Activated B cell treated with CpG ODN at 0.5 μM for 24 hours (primary cell): ENCODE measurements at regions of chr9 and their contacts with region 1.

Region 1: GRCh38 chr9:68584189-68585033 is 43.7 kb upstream of the TMEM252 start:
- DNase-seq: peak; percentile 57
- ATAC-seq: peak; percentile 100
- H3K4me3 Mint-ChIP-seq: peak overlapping the region; percentile 42
- H3K27ac Mint-ChIP-seq: no peak overlapping the region
- H3K4me1 Mint-ChIP-seq: peaks cover 27% of the 10 kb centered on the region
- H3K27me3 Mint-ChIP-seq: no peaks in the 10 kb centered on the region
- CTCF ChIP-seq: peak; percentile 99

Region 2: DNA sequence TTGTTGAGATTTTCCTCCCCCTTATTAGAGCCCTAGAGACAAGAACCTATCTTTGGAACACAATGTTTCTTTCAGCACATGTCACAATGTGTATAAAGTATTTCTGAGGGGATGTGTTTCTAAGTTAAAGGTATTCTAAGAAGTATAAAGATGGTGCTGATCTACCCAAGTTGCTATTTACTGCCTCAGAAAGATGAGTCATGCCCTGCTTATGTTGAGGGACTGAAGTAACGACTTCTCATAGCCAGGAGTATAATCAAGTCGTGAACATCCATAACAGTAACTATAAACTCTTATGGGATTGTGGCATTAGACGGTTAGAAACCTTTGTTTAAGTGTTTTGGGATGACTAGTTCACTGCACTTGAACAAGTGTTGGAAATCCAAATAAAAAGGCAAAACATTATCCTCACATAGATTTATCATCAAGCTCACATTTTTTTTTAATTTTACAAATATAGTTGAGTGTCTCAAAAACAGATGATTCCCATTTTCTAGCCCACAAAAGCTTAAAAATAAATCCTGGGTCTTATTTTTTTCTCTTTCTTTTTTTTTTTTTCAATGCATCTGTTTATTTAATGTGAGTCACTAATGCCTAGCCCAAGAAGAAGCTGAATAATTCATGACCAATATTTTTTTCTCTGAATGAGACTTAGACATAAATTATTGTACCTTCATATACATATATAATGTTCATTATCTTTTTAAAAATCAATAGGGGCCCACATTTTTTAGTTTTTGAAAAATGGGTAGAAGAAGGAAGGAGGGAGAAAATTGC is 31.5 kb before region 1 on chr9:
- CTCF ChIA-PET with region 1: no interaction called
- POLR2A ChIA-PET with region 1: no interaction called
- intact Hi-C with region 1: no loop called
- DNase-seq: no peak
- ATAC-seq: no peak
- H3K4me3 Mint-ChIP-seq: no peak overlapping the region
- H3K27ac Mint-ChIP-seq: no peak overlapping the region
- H3K4me1 Mint-ChIP-seq: peaks cover 8% of the 10 kb centered on the region
- H3K27me3 Mint-ChIP-seq: no peaks in the 10 kb centered on the region
- CTCF ChIP-seq: no peak

Region 3: DNA sequence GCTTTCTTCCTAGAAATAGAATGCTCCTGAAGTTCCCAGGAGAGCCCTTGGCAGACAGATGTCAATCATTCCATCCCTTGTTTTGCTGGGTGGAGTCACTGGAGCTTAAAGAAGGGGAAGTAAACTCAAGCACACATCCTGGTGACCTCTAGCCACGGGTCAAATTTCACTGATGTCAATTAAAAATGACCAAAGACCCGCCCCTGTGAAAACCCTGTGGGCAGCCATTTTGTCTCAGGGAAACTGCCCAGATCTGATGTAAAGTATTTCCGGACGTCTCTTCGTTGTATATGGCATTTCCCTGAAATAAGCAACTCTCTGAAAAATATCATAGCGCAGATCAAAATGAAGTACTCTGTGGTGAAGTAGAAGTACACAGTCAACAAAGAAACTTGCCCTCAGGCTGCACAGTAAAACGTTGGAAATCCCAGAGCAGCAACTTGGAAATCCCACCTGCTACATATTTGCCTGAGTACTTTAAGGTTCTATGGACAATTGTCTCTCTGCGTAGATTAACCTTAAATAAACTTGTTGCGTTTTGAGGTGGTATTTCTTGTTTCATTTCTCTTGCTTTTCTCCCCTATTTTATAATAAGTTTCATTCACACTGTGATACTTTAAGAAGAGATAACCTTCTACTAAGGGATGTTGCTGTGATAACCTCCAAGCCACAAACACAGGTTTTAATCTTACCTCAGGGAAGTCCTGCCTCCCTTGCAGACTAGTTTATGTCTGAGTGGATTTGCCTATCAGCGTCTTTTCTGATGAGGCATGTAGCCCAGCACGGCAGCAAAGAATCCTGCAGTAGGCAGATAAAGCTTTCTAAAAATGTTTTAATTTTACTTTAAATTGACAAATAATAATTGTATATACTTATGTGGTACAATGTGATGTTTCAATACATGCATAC is 59.7 kb after region 1 on chr9:
- CTCF ChIA-PET with region 1: interaction called, 4 read pairs
- POLR2A ChIA-PET with region 1: interaction called, 6 read pairs
- intact Hi-C with region 1: loop called (anchors 2 kb)
- DNase-seq: peak; percentile 31
- ATAC-seq: peak; percentile 63
- H3K4me3 Mint-ChIP-seq: peak overlapping the region; percentile 73
- H3K27ac Mint-ChIP-seq: peak overlapping the region; percentile 94
- H3K4me1 Mint-ChIP-seq: peaks cover 93% of the 10 kb centered on the region
- H3K27me3 Mint-ChIP-seq: no peaks in the 10 kb centered on the region
- CTCF ChIP-seq: no peak

Region 4: DNA sequence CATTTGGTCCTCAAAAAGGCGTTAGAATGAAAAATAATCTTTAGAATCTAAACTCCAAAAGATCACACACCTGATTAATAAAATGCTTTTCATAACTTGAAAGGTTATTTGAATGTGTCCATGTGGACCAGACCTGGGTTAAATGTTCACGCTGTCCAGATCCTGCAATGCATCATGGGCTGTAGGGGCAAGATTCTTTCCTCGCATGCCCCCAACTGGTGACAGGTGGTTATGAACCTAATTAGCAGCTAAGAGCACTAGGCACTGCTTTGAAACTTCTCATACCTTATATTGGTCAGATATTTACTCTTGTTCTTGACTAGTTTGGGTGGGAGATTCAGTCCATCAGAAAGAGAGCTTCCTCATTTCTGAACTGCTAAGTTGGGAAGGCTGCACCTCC is 101.4 kb after region 1 on chr9:
- CTCF ChIA-PET with region 1: interaction called, 38 read pairs
- POLR2A ChIA-PET with region 1: no interaction called
- intact Hi-C with region 1: loop called (anchors 1 kb)
- DNase-seq: peak; percentile 27
- ATAC-seq: peak; percentile 97
- H3K4me3 Mint-ChIP-seq: no peak overlapping the region
- H3K27ac Mint-ChIP-seq: no peak overlapping the region
- H3K4me1 Mint-ChIP-seq: peaks cover 9% of the 10 kb centered on the region
- H3K27me3 Mint-ChIP-seq: no peaks in the 10 kb centered on the region
- CTCF ChIP-seq: no peak

Region 5: GRCh38 chr9:68779558-68780384 is 195.4 kb after region 1 on chr9:
- CTCF ChIA-PET with region 1: interaction called, 7 read pairs
- POLR2A ChIA-PET with region 1: interaction called, 3 read pairs
- intact Hi-C with region 1: loop called (anchors 1 kb)
- DNase-seq: peak; percentile 93
- ATAC-seq: peak; percentile 93
- H3K4me3 Mint-ChIP-seq: no peak overlapping the region
- H3K27ac Mint-ChIP-seq: no peak overlapping the region
- H3K4me1 Mint-ChIP-seq: peaks cover 6% of the 10 kb centered on the region
- H3K27me3 Mint-ChIP-seq: no peaks in the 10 kb centered on the region
- CTCF ChIP-seq: no peak

Region 6: GRCh38 chr9:68949271-68950000 is 365.0 kb after region 1 on chr9:
- CTCF ChIA-PET with region 1: interaction called, 9 read pairs
- POLR2A ChIA-PET with region 1: no interaction called
- intact Hi-C with region 1: loop called (anchors 1 kb)
- DNase-seq: no peak
- ATAC-seq: no peak
- H3K4me3 Mint-ChIP-seq: no peak overlapping the region
- H3K27ac Mint-ChIP-seq: peak overlapping the region; percentile 4
- H3K4me1 Mint-ChIP-seq: peaks cover 28% of the 10 kb centered on the region
- H3K27me3 Mint-ChIP-seq: no peaks in the 10 kb centered on the region
- CTCF ChIP-seq: no peak

Region 7: DNA sequence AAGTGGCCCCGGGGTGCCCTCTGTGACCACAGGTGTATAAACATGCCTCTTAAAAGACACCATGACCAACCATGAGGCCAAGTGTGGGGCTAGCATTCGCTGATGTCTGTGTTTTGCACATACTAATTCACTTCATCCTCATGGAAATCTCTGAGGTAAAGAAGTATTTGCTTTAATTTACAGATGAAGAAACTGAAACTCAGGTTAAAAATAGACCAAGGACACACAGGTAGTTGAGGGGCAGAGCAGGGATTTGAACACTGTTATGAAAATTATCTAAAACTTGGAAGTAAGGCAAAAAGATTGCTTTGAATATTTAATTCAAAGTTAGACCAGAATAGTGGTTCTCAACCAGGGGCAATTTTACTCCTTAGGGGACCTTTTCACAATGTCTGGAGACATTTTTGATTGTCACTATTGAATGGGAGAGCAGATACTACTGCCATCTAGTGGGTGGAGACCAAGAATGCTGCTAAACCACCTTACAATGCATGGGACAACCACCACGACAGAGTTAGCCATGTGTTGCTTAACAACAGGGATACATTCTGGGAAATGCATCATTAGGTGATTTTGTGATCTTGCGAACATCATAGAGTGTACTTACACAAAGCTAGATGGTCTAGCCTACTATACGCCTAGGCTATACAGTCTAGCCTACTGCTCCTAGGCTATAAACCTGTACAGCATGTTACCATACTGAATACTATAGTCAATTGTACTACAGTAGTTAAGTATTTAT is 443.1 kb after region 1 on chr9:
- CTCF ChIA-PET with region 1: no interaction called
- POLR2A ChIA-PET with region 1: no interaction called
- intact Hi-C with region 1: loop called (anchors 1 kb)
- DNase-seq: no peak
- ATAC-seq: peak; percentile 89
- H3K4me3 Mint-ChIP-seq: no peak overlapping the region
- H3K27ac Mint-ChIP-seq: no peak overlapping the region
- H3K4me1 Mint-ChIP-seq: peaks cover 7% of the 10 kb centered on the region
- H3K27me3 Mint-ChIP-seq: no peaks in the 10 kb centered on the region
- CTCF ChIP-seq: no peak